ENCODE measurements at regions of chr12 and their contacts with region 1.

Region 1: DNA sequence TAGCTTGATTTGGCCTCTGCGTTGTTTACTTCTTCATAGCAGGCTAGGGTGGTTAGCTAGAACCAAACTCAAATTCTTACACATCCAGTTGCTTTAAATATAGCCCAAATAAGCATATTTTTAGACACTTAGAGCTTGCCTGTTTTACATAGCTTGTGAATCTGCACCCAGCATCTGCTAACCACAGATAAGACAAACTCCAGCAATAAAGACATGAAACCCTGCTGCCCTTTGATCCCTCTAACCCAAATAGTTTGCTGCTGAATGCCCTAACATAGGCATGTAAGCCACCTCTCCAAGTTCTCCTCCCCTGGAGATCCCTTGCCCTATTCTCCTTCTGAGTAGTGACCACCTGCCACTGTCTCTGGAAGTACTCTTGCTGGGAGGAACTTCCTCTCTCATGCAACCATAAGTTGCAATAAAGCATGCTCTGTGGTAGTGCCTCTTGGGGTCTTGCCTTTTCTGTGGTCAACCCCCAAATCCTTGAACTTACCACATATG is 185.6 kb downstream of the TMEM117 start:
- DNase-seq: no peak
- ATAC-seq: no peak
- H3K4me3 ChIP-seq: no peak overlapping the region
- H3K27ac ChIP-seq: no peak overlapping the region
- H3K4me1 ChIP-seq: no peaks in the 10 kb centered on the region
- H3K27me3 ChIP-seq: no peaks in the 10 kb centered on the region
- CTCF ChIP-seq: no peak
- POLR2A ChIP-seq: no peak

Region 2: GRCh38 chr12:44929236-44929885 is 907.8 kb after region 1 on chr12:
- intact Hi-C with region 1: loop called (anchors 10 kb)
- DNase-seq: no peak
- ATAC-seq: no peak
- H3K4me3 ChIP-seq: no peak overlapping the region
- H3K27ac ChIP-seq: no peak overlapping the region
- H3K4me1 ChIP-seq: no peaks in the 10 kb centered on the region
- H3K27me3 ChIP-seq: no peaks in the 10 kb centered on the region
- CTCF ChIP-seq: no peak
- POLR2A ChIP-seq: no peak

Measured in body of pancreas (tissue), 4 donors.